Endothelial cell of umbilical vein (primary cell): ENCODE measurements at regions of chr6 and their contacts with region 1.

Region 1: DNA sequence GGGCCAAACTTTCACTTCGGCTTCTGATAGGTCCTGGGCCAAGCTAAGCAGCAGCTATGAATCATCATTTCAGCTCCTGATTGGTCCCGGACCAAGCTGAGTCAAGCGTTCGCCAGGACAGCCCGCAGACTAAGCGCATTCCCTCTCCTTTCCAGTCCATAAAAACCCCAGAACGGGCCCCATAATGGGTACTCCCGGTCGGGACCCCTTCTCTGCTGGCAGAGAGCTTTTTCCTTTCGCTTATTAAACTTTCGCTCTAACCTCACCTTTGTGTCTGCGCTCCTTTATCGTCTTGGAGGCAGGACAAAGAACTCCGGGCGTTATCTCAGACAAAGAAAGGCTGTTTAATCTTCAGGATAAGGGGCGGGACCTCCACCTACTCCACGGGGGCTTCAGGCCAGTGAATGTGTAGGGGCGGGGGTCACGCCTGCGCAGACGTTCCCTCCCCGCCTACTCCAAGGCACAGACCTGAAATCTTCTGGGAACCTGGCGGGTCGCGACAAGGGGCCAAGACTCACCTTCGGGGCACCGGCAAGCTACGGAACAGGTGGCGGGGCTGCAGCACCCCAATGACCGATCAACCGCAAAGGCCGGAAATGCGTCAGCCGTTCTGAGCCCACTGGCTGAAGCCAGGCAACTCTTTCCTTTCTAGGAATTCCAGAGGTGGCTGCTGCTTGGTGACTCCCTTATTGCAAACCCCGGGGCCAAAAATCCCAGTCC is at the start of gene ZSCAN31:
- DNase-seq: peak; percentile 98
- H3K4me3 ChIP-seq: peak within 1 kb of the TSS; percentile 70 to 79 (median 73)
- H3K27ac ChIP-seq: peak within 1 kb of the TSS; percentile 96
- H3K4me1 ChIP-seq: peaks cover 15% of the 10 kb centered on the region
- H3K27me3 ChIP-seq: no peaks in the 10 kb centered on the region
- CTCF ChIP-seq: no peak
- POLR2A ChIP-seq: peak; percentile 94
- total RNA-seq, gene ZSCAN31: 19.5 and 23.0 TPM in 2 replicates

Region 2: GRCh38 chr6:28080631-28081485 is 254.9 kb before region 1 on chr6:
- CTCF ChIA-PET with region 1: no interaction called
- POLR2A ChIA-PET with region 1: no interaction called
- dilution Hi-C with region 1: no loop called
- intact Hi-C with region 1: loop called (anchors 2 kb)
- DNase-seq: peak; percentile 97
- H3K4me3 ChIP-seq: peak overlapping the region; percentile 1 to 73 (median 64)
- H3K27ac ChIP-seq: peak overlapping the region; percentile 87
- H3K4me1 ChIP-seq: peaks cover 9% of the 10 kb centered on the region
- H3K27me3 ChIP-seq: no peaks in the 10 kb centered on the region
- CTCF ChIP-seq: no peak
- POLR2A ChIP-seq: peak; percentile 36

Region 3: DNA sequence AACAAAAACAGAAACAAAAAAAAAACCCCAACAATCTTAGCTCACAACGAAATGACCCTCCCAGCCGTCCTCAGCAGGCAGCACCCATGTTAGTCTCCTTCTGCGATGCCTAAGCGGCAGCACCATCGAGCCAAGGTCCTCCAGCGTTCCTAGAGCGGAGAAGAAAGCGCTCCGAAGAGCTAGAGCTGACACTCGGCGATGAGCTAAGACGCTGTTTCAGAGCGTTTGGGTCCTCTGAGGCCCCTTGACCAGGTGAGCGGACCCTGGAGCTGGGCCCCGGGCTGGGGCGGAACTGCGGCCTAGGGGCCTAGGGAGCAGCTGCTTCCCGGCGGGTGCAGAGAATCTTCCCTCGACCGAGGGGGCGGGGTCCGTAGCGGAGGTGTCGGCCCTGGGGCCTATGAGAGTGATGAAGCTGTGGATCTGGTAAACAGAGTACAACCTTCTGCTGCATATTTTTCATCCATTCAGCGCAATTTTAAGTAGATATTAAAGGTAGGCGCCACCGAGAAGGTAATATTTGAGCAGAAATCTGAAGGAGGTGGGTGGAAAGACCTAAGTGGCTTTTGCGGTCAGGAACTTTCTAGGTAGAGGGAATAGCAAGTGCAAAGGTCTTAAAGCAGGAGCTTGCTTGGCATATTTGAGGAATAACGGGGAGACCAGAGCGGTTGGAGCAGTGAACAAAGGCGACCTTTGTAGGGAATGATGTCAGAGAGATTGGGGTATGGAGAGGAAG is 68.6 kb before region 1 on chr6 and contains the start of gene ZSCAN26:
- CTCF ChIA-PET with region 1: interaction called, 4 read pairs
- POLR2A ChIA-PET with region 1: interaction called, 9 read pairs
- dilution Hi-C with region 1: no loop called
- intact Hi-C with region 1: loop called (anchors 1 kb)
- DNase-seq: peak; percentile 92
- H3K4me3 ChIP-seq: peak within 1 kb of the TSS; percentile 73 to 96 (median 85)
- H3K27ac ChIP-seq: peak within 1 kb of the TSS; percentile 71
- H3K4me1 ChIP-seq: peaks cover 35% of the 10 kb centered on the region
- H3K27me3 ChIP-seq: peaks cover 0 to 3% of the 10 kb centered on the region in 2 experiments
- CTCF ChIP-seq: no peak
- POLR2A ChIP-seq: peak; percentile 81
- total RNA-seq, gene ZSCAN26: 12.7 and 14.1 TPM in 2 replicates

Region 4: DNA sequence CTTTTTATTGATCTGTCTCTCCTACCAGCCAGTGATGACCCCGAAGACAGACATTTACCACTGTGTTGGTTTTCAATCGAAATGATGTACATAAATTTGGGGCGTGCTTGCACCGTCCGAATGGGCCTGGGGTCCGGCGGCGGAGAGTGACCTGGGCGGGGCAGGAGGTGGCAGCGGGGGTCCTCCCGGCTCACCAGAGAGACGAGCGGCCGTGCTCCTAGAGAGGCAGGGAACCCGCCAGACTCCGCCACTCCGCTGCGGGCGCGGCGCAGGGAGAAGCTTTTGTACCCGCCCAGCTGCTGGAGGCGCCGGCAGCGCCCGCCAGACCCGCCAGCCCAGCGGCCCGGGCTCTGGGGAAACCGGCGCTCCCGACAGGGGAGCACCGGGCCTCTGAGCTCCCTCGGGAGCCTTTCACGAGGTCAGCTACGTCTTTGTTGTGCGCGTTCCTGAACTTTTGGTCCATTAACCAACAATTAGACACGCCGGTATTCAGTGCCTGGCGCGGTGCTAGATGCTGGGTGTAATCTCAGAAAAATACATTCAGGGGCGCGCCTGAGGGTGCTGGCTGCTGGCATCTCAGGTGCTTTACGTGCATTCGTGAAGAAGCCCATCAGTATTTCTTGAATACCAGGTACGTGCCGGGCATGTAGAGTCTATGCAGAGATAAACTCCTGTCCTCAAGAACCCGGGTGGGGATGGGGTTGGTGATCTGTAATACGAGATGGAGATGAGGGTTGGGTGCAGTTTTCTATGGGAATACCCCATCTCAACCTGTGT is 54.2 kb before region 1 on chr6 and contains the start of gene PGBD1:
- CTCF ChIA-PET with region 1: no interaction called
- POLR2A ChIA-PET with region 1: interaction called, 5 read pairs
- dilution Hi-C with region 1: no loop called
- intact Hi-C with region 1: loop called (anchors 5 kb)
- DNase-seq: peak; percentile 77
- H3K4me3 ChIP-seq: peak within 1 kb of the TSS; percentile 68 to 96 (median 93)
- H3K27ac ChIP-seq: peak within 1 kb of the TSS; percentile 46
- H3K4me1 ChIP-seq: peaks cover 7% of the 10 kb centered on the region
- H3K27me3 ChIP-seq: no peaks in the 10 kb centered on the region
- CTCF ChIP-seq: no peak
- POLR2A ChIP-seq: peak; percentile 81
- total RNA-seq, gene PGBD1: 9.6 and 10.1 TPM in 2 replicates

Region 5: DNA sequence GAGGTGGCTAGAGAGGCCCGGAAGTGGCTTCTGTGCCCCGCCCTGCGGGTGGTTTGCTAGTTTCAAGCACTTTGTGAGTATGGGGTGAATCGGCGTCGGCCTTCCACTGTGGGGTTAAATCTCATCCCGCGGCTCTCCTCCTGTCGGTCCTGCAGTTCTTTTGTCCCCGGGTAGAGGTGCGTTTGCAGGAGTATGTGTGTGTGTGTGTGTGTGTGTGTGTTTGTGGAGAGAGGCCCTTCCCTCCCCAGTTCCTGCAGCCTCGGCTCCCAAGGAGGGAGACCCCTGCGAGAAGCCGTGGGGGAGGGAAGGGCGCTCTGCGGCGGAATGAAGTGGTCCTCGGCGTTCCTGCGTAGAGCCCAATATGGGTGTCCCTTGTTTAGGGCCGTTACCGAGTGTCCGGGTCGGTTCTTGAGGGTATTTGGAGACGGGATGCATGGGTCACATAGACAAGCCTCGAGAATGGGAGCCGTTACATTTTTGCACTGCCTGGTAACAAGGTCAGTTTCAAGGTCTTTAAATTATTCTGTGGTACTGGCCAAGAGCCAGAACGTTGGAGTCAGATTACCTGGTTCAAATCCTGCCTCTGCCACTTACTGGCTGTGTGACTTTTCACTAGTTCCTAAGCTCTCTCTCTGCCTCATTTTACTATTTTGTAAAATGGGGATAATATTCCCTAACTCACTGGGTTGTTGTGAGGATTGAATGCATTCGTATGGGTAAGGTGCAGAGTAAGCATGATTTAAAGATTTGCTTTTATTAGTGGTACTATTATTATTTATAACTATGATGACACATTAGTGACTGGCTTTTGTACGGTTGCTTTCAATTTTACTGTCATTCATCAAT is 14.4 kb after region 1 on chr6 and contains the start of gene ZKSCAN3:
- CTCF ChIA-PET with region 1: interaction called, 33 read pairs
- POLR2A ChIA-PET with region 1: interaction called, 5 read pairs
- dilution Hi-C with region 1: no loop called
- intact Hi-C with region 1: loop called (anchors 1 kb)
- DNase-seq: peak; percentile 76
- H3K4me3 ChIP-seq: peak within 1 kb of the TSS; percentile 80 to 89 (median 86)
- H3K27ac ChIP-seq: peak within 1 kb of the TSS; percentile 60
- H3K4me1 ChIP-seq: peaks cover 24% of the 10 kb centered on the region
- H3K27me3 ChIP-seq: no peaks in the 10 kb centered on the region
- CTCF ChIP-seq: no peak
- POLR2A ChIP-seq: peak; percentile 85
- total RNA-seq, gene ZKSCAN3: 4.9 and 6.9 TPM in 2 replicates

Region 6: GRCh38 chr6:28383235-28384142 is 47.8 kb after region 1 on chr6:
- CTCF ChIA-PET with region 1: interaction called, 3 read pairs
- POLR2A ChIA-PET with region 1: no interaction called
- dilution Hi-C with region 1: no loop called
- intact Hi-C with region 1: loop called (anchors 2 kb)
- DNase-seq: peak; percentile 93
- H3K4me3 ChIP-seq: peak overlapping the region; percentile 37 to 45 (median 42)
- H3K27ac ChIP-seq: peak overlapping the region; percentile 14
- H3K4me1 ChIP-seq: peaks cover 9% of the 10 kb centered on the region
- H3K27me3 ChIP-seq: no peaks in the 10 kb centered on the region
- CTCF ChIP-seq: peak; percentile 54 to 62
- POLR2A ChIP-seq: no peak

Region 7: DNA sequence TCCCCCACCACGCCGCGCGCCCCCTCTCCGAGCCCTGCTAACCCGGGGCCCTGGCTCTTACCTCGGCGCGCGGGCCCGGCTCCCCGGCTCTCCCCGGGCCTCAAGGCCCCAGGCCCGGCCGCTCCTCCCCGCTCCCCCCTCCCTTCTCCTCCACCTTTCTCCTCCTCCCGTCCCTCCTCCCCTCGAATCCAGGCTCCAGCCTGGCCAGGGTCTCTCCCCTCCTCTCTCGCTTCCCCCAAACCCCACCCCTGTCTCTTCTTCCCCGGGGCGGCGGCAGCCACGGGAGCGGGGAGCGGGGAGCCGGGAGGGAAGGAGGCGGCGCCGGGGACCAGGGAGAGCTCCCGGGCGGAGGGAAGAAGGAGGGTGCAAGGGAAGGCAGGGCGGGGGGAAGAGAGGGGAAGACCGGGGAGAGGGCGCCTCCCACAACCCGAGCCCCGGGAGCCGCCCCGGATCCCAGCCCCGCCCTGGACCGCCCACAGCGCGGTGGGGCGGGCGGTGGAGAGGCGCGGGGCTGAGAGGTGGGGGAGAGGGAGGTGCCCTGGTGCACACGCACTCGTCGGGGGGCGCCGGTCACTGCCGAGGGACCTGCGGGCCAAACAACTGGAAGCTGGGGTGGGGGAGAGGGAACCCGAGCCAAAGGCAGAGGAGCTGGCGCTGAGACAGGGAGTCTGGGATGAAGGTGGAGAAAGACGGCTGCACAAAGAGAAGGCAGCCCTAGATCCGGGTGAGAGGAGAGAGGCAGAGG is 1297.2 kb after region 1 on chr6 and contains the start of gene GABBR1:
- CTCF ChIA-PET with region 1: no interaction called
- POLR2A ChIA-PET with region 1: no interaction called
- dilution Hi-C with region 1: no loop called
- intact Hi-C with region 1: loop called (anchors 5 kb)
- DNase-seq: peak; percentile 59
- H3K4me3 ChIP-seq: peak within 1 kb of the TSS; percentile 57 to 73 (median 62)
- H3K27ac ChIP-seq: no peak within 1 kb of the TSS
- H3K4me1 ChIP-seq: peaks cover 28% of the 10 kb centered on the region
- H3K27me3 ChIP-seq: no peaks in the 10 kb centered on the region
- CTCF ChIP-seq: no peak
- POLR2A ChIP-seq: no peak
- total RNA-seq, gene GABBR1: 50.8 and 52.1 TPM in 2 replicates